CD4-positive, alpha-beta T cell (primary cell): ENCODE measurements at regions of chr12 and their contacts with region 1.

Region 1: DNA sequence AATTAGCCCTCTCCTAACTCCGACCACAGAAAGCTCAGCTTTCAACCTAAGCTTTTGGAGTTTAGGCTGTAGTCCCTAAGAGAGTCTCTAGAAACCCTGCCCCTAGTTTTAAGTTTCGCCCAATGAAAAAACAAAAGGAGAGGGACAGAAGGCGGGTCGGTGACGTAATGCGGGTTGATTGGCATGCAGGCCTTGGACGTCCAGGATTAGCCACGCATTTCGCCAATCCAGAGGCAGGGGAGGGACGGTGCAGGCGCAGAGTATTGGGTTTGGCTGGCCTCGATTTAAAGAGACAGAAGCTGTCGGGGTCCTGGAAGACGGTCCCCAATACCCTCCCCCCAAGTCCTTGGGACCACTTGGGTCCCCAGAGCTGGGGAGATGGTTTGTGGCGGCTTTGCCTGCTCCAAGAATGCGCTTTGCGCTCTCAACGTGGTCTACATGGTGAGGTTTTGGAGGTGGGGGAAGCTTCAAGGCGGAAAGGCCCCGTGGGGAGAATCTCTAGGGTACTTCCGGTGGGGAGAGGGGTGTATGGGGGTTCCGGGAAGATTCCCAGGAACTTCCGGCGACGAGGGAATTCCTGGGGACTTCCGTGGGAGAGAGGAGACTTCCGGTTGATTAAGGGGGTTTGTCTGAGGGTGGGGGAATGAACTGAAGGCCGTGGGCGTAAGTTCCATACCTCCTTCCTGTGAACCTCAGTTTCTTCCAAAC is at the start of gene TSPAN31:
- DNase-seq: peak; percentile 82 to 98 (median 92)
- ATAC-seq: peak; percentile 80
- H3K4me3 ChIP-seq: peak within 1 kb of the TSS; percentile 83
- H3K4me3 Mint-ChIP-seq: peak within 1 kb of the TSS; percentile 94
- H3K27ac ChIP-seq: peak within 1 kb of the TSS; percentile 84 to 96
- H3K27ac Mint-ChIP-seq: peak within 1 kb of the TSS; percentile 94
- H3K4me1 ChIP-seq: peaks cover 54% of the 10 kb centered on the region
- H3K4me1 Mint-ChIP-seq: peaks cover 61% of the 10 kb centered on the region
- H3K27me3 ChIP-seq: no peaks in the 10 kb centered on the region
- H3K27me3 Mint-ChIP-seq: no peaks in the 10 kb centered on the region
- CTCF ChIP-seq: no peak
- total RNA-seq, gene TSPAN31: 10.3 to 10.7 TPM

Region 2: DNA sequence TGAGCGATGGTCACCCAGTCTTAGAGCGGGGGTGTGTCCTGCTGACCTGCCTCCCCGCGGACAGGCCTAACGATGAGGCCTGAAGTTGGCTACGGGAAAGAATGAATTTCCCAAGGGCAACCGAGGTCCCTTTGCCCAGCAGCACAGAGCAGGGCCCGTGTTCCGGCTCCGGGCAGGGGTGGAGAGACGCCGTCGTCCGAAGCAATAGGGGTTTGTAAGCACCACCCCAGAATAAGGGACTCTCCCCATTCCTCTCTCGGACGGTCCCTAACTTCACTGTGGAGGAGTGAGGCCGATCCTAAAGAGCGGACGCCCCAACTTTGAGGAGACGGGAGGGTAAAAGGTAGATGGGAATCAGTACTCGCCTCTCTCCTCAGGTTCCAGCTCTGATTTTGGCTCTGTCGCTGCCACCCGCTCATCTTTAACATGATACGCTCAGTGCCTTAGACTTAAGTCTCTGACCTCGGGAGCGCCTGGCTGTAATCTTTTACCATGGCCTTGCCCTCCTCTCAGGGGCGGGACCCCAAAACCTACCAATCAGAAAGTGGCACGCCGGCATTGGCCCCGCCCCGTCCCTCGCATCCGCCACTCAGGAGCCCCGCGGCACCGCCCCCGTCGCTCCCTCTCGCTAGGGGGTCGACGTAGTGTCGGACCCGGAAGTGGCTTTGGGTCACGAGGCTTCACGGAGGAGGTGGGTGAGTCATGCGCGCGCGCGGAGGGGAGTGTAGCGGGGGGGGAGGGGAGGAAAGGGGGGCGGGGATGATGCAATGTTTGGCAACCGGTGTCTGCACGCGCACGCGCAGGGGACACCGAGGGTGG is 224.7 kb before region 1 on chr12 and contains the start of gene DDIT3:
- CTCF ChIA-PET with region 1: no interaction called
- POLR2A ChIA-PET with region 1: interaction called, 10 read pairs
- intact Hi-C with region 1: loop called in 1 of 2 experiments (anchors 5 kb)
- DNase-seq: peak; percentile 98 to 100 (median 99)
- ATAC-seq: peak; percentile 78
- H3K4me3 ChIP-seq: peak within 1 kb of the TSS; percentile 100
- H3K4me3 Mint-ChIP-seq: peak within 1 kb of the TSS; percentile 95
- H3K27ac ChIP-seq: peak within 1 kb of the TSS; percentile 97 to 99
- H3K27ac Mint-ChIP-seq: peak within 1 kb of the TSS; percentile 100
- H3K4me1 ChIP-seq: peaks cover 67% of the 10 kb centered on the region
- H3K4me1 Mint-ChIP-seq: peaks cover 64% of the 10 kb centered on the region
- H3K27me3 ChIP-seq: no peaks in the 10 kb centered on the region
- H3K27me3 Mint-ChIP-seq: no peaks in the 10 kb centered on the region
- CTCF ChIP-seq: no peak
- total RNA-seq, gene DDIT3: 145 TPM

Region 3: GRCh38 chr12:57583008-57583831 is 161.7 kb before region 1 on chr12:
- CTCF ChIA-PET with region 1: interaction called, 5 read pairs
- POLR2A ChIA-PET with region 1: interaction called, 4 read pairs
- intact Hi-C with region 1: loop called (anchors 2 kb)
- DNase-seq: peak; percentile 33 to 89 (median 56)
- ATAC-seq: peak; percentile 100
- H3K4me3 ChIP-seq: no peak overlapping the region
- H3K4me3 Mint-ChIP-seq: no peak overlapping the region
- H3K27ac ChIP-seq: no peak overlapping the region
- H3K27ac Mint-ChIP-seq: no peak overlapping the region
- H3K4me1 ChIP-seq: peaks cover 8% of the 10 kb centered on the region
- H3K4me1 Mint-ChIP-seq: no peaks in the 10 kb centered on the region
- H3K27me3 ChIP-seq: peaks cover 0 to 10% of the 10 kb centered on the region in 2 experiments
- H3K27me3 Mint-ChIP-seq: peaks cover 15% of the 10 kb centered on the region
- CTCF ChIP-seq: peak; percentile 96

Region 4: DNA sequence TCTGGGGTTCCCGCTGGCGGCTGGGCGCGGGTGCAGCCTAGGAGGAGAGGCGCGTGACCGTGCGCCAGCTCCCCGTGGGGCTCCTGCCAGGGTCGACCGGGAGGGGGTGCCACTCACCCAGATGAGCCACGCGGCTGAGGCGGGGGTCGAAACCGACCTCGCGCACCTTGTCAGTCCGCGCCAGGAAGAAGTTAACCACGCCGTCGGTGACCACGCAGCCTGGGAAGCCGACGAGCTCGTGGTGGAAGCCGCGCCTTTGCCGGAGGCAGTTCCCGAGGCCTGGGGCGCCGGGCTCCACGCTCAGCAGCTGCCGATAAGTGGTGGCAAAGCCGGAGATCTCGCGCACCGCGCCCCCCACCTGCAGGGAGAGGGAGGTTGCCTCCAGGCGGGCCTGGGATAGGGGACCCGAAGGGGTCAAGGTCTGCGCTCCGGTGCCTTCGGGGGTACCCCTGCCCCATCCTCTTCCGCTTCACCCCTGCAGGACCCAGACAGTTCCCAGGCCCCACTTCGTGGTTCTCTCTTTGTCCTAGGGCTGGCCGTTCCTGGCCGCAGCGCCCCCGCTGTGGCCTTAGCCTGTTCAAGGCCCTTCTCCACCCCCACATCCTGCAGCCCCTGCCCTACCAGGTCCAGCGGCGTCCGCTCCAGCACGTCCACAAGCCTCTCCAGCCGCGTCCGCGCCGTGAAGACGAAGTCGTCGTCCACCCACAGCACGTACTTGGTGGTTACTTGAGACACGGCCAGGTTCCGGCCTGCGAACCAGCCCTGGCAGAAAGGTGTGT is 117.2 kb before region 1 on chr12:
- CTCF ChIA-PET with region 1: interaction called, 3 read pairs
- POLR2A ChIA-PET with region 1: interaction called, 4 read pairs
- intact Hi-C with region 1: loop called in 1 of 2 experiments (anchors 5 kb)
- DNase-seq: peak in 4 of 14 experiments; percentile 7 to 51 (median 42)
- ATAC-seq: peak; percentile 57
- H3K4me3 ChIP-seq: peak overlapping the region; percentile 7
- H3K4me3 Mint-ChIP-seq: no peak overlapping the region
- H3K27ac ChIP-seq: no peak overlapping the region
- H3K27ac Mint-ChIP-seq: no peak overlapping the region
- H3K4me1 ChIP-seq: peaks cover 25% of the 10 kb centered on the region
- H3K4me1 Mint-ChIP-seq: peaks cover 18% of the 10 kb centered on the region
- H3K27me3 ChIP-seq: peaks cover 87 to 94% of the 10 kb centered on the region in 2 experiments
- H3K27me3 Mint-ChIP-seq: peaks cover 95% of the 10 kb centered on the region
- CTCF ChIP-seq: no peak

Region 5: DNA sequence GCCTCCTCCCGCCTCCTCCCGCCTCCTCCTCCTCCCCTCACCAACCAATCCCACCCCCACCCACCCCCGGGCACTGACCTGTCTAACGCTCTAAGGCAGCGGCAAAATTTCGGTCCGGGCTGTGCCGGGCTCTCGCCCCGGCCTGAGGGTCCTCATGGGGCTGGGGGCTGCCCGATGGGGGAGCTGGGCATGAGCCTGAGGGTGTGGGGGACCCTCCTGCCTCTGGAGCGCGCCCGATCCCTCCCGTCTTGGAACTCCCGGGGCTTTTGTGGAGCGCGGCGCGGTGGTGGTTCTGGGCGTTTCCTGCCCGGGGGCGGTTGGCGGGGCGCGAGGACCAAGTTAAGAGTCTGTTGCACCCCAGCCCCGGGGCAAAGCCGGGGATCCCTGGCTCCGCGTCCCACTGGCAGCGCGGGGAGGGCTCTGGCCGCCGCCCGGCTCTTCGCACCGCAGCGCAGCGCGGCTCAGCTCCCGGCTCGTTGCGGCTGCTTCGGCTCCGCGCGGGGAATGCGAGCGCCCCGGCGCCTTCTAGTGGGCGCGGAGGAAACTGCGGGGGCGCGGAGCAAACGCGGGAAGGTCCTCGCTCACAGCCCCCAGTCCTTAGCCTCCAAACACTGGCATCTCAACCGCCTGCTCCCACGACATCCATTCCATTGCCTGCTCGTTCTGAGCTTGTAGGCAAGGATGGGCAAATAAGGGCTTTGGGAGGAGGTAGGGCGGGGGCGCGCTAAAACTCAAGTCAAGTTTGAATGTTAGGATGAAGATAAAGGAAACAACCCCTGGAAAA is 112.0 kb before region 1 on chr12 and contains the start of gene B4GALNT1:
- CTCF ChIA-PET with region 1: interaction called, 3 read pairs
- POLR2A ChIA-PET with region 1: interaction called, 4 read pairs
- intact Hi-C with region 1: loop called (anchors 1 to 5 kb)
- DNase-seq: peak; percentile 33 to 84 (median 56)
- ATAC-seq: peak; percentile 93
- H3K4me3 ChIP-seq: peak within 1 kb of the TSS; percentile 56
- H3K4me3 Mint-ChIP-seq: peak within 1 kb of the TSS; percentile 72
- H3K27ac ChIP-seq: no peak within 1 kb of the TSS
- H3K27ac Mint-ChIP-seq: no peak within 1 kb of the TSS
- H3K4me1 ChIP-seq: peaks cover 22% of the 10 kb centered on the region
- H3K4me1 Mint-ChIP-seq: peaks cover 18% of the 10 kb centered on the region
- H3K27me3 ChIP-seq: peaks cover 53 to 61% of the 10 kb centered on the region in 2 experiments
- H3K27me3 Mint-ChIP-seq: peaks cover 67% of the 10 kb centered on the region
- CTCF ChIP-seq: peak; percentile 89
- total RNA-seq, gene B4GALNT1: not detected

Region 6: DNA sequence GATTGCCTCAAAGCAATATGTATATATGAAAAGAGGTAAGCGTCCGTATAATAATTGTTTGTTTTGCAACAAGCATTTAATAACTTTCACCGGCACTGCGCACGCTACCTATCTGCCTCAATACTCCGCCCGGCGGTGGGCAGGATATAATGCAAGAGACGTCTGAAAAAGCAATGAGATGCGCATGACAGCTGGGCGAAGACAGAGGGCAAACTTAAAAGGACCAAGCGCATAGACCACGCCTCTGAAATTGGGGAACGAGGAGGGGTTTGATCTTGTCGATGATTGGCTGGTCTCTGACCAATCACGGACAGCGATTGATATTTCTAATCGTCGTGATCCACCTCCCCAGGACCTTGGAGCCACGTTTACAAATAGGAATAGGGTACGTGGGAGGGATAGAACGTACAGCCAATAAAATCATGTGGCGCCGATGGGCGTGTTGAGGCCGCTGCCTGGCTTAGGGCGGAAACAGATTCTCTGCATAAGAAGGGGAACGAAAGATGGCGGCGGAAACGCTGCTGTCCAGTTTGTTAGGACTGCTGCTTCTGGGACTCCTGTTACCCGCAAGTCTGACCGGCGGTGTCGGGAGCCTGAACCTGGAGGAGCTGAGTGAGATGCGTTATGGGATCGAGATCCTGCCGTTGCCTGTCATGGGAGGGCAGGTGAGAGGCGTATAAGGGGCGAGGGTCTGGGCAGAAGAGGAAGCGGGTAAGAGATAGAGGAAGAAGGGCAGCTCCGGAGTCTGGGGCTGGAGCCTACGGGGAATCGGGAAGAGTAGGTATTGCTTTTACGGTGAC is 51.1 kb before region 1 on chr12 and contains the start of gene OS9:
- CTCF ChIA-PET with region 1: interaction called, 3 read pairs
- POLR2A ChIA-PET with region 1: interaction called, 10 read pairs
- intact Hi-C with region 1: loop called in 1 of 2 experiments (anchors 5 kb)
- DNase-seq: peak; percentile 83 to 100 (median 92)
- ATAC-seq: peak; percentile 92
- H3K4me3 ChIP-seq: peak within 1 kb of the TSS; percentile 95
- H3K4me3 Mint-ChIP-seq: no peak within 1 kb of the TSS
- H3K27ac ChIP-seq: peak within 1 kb of the TSS; percentile 59 to 73
- H3K27ac Mint-ChIP-seq: no peak within 1 kb of the TSS
- H3K4me1 ChIP-seq: peaks cover 16% of the 10 kb centered on the region
- H3K4me1 Mint-ChIP-seq: peaks cover 9% of the 10 kb centered on the region
- H3K27me3 ChIP-seq: no peaks in the 10 kb centered on the region
- H3K27me3 Mint-ChIP-seq: peaks cover 11% of the 10 kb centered on the region
- CTCF ChIP-seq: peak; percentile 82
- total RNA-seq, gene OS9: 108 to 112 TPM

Region 7: DNA sequence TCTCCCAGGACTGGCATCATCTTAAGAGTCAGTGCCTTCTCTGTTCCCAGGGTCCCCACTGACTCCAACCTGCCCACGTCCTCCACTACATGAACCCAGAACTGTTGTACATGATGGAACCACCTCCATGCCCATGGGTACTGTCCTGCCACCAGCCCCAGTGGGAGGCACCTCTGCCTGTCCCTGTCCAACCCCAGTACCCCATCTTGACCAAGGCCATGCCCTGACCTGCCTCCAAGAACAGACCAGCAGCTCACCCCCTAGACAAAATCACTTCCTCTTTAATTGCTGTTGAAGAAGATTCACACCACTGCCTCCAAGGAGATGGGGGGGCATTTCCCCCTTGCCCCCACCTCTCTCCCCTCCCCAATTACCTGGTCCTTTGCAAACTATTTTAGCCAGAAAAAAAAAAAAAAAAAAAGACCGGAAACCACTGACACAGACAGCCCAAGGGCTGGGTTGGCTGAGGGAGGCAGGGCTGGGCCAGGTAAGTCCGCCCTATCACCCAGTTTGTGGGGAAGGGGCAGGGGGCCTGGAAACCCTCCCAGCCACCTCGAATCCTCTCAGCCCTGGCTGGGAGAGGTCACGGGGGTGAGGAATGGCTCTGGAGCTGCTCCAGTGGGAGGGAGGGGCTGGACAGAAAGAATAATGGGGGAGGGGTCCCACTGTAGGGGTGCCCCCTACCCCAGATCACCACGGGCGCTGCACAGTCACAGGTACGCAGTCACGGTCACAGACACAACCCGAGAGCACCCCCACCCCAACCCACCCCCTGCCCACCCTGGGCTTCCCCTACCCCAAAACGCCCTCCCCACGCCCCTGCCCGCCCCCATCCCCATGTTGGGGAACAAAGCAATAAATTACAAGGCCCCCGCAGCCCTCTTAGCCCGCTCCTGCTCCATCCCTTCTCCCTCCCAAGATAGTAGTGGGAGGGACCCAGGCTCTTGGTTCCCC is 19.7 kb before region 1 on chr12:
- CTCF ChIA-PET with region 1: no interaction called
- POLR2A ChIA-PET with region 1: interaction called, 10 read pairs
- intact Hi-C with region 1: no loop called
- DNase-seq: peak in 1 of 14 experiments; percentile 28
- ATAC-seq: no peak
- H3K4me3 ChIP-seq: no peak overlapping the region
- H3K4me3 Mint-ChIP-seq: no peak overlapping the region
- H3K27ac ChIP-seq: peak overlapping the region in 1 of 2 donors; percentile 31
- H3K27ac Mint-ChIP-seq: peak overlapping the region; percentile 59
- H3K4me1 ChIP-seq: peaks cover 10% of the 10 kb centered on the region
- H3K4me1 Mint-ChIP-seq: peaks cover 21% of the 10 kb centered on the region
- H3K27me3 ChIP-seq: no peaks in the 10 kb centered on the region
- H3K27me3 Mint-ChIP-seq: no peaks in the 10 kb centered on the region
- CTCF ChIP-seq: no peak